IMR-90 (cell line): ENCODE measurements at regions of chrX and their contacts with region 1.

Region 1: DNA sequence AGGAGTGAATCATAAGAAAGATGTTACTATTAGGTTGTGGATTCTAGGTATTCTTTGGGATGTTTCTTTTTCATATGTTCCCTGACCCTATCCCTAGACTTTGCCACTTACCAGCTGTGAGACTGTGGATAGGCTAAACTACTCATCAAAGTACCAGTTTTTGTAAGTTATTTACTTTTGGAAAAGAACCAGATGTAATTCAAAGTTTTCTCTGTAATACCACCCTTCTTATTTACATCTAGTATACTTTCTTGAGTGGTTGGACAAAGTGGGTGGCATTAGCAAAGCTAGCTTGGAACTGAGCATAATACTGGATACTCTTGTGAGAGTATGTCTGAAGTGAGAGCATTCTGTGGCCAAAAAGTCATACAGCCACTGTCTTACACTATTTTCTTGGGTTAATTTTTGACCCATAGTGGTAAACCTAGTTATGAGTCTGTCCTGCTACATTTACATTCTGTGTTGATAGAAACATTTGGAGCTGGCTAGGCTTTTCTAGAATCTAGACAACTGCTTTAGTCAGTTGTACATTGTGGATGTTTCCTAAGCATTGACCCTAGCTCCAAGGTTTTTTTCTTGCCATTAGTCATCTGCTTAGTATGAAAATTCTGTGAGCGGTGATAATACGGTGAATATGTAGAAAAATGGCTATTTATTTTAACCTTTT is 41.7 kb downstream of the KDM6A start:
- DNase-seq: peak; percentile 68
- ATAC-seq: peak; percentile 75
- H3K4me3 ChIP-seq: no peak overlapping the region
- H3K27ac ChIP-seq: no peak overlapping the region
- H3K4me1 ChIP-seq: peaks cover 5% of the 10 kb centered on the region
- H3K27me3 ChIP-seq: no peaks in the 10 kb centered on the region
- CTCF ChIP-seq: no peak
- POLR2A ChIP-seq: no peak
- RAD21 ChIP-seq: no peak

Region 2: DNA sequence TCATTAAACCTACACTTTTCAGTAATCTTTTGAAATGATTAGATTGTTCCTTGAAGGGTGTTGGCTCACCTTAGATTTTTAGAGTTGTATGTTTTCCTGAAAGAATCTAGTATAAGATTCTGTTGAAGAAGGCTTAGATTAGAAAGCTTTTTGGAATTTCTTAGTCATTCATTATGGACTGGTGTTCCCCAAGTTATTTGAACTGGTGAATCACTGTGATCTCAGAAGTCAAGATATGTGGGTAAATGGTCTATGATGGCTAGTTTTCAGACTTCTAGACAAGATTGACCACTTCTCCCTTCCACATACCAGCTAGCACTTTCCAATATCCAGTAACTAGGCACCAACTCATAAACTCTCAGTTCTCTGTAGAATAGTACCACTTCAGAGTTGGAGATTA is 96.5 kb after region 1 on chrX:
- CTCF ChIA-PET with region 1: no interaction called
- POLR2A ChIA-PET with region 1: no interaction called
- dilution Hi-C with region 1: no loop called
- in situ Hi-C with region 1: no loop called
- intact Hi-C with region 1: loop called (anchors 5 kb)
- DNase-seq: peak; percentile 68
- ATAC-seq: peak; percentile 66
- H3K4me3 ChIP-seq: no peak overlapping the region
- H3K27ac ChIP-seq: no peak overlapping the region
- H3K4me1 ChIP-seq: peaks cover 2% of the 10 kb centered on the region; the same call in 1 of the 2 replicates
- H3K27me3 ChIP-seq: no peaks in the 10 kb centered on the region
- CTCF ChIP-seq: no peak
- POLR2A ChIP-seq: no peak
- RAD21 ChIP-seq: no peak

Region 3: GRCh38 chrX:45322382-45322781 is 407.7 kb after region 1 on chrX:
- CTCF ChIA-PET with region 1: no interaction called
- POLR2A ChIA-PET with region 1: no interaction called
- dilution Hi-C with region 1: no loop called
- in situ Hi-C with region 1: no loop called
- intact Hi-C with region 1: no loop called
- DNase-seq: peak; percentile 83
- ATAC-seq: peak; percentile 87
- H3K4me3 ChIP-seq: no peak overlapping the region
- H3K27ac ChIP-seq: peak overlapping the region; percentile 66
- H3K4me1 ChIP-seq: no peaks in the 10 kb centered on the region
- H3K27me3 ChIP-seq: peaks cover 4% of the 10 kb centered on the region
- CTCF ChIP-seq: peak; percentile 69
- POLR2A ChIP-seq: no peak
- RAD21 ChIP-seq: peak; percentile 81